A549 (cell line): ENCODE measurements at regions of chr14 and their contacts with region 1.

Region 1: DNA sequence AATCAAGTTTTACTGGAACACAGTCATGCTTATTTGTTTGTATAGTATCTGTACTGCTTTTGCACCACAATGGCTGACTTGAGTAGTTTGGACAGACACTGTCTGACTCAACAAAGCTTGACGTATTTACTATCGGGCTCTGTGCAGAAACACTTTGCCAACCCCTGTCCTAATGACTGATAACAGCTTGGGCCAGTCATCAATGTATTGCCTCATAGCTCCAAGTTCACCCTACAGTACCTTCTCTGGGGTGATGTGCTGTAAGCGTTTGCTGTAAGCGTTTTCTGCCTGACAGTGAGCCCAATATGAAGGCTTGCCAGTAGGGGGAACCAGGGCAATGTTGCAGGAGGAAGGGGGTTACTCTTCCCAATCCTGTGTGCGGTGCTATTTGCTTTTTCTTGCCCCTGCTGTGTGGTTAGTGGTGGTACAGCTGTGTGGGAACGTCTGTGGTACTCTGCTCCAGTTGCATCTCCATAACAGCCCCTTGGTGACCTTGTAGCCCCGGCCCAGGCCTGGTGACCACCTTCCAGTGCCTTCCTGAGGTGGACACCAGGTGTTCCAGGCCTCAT is 5.4 kb upstream of the CCDC177 start:
- DNase-seq: peak; percentile 60 to 71
- ATAC-seq: peak; percentile 92 to 93
- H3K4me3 ChIP-seq: no peak overlapping the region
- H3K27ac ChIP-seq: no peak overlapping the region
- H3K4me1 ChIP-seq: peaks cover 5% of the 10 kb centered on the region; the same call in 1 of the 3 replicates
- CTCF ChIP-seq: peak; percentile 32
- EP300 ChIP-seq: no peak
- POLR2A ChIP-seq: no peak
- RAD21 ChIP-seq: peak; percentile 34 to 46; a peak in 4 of 5 replicates

Region 2: DNA sequence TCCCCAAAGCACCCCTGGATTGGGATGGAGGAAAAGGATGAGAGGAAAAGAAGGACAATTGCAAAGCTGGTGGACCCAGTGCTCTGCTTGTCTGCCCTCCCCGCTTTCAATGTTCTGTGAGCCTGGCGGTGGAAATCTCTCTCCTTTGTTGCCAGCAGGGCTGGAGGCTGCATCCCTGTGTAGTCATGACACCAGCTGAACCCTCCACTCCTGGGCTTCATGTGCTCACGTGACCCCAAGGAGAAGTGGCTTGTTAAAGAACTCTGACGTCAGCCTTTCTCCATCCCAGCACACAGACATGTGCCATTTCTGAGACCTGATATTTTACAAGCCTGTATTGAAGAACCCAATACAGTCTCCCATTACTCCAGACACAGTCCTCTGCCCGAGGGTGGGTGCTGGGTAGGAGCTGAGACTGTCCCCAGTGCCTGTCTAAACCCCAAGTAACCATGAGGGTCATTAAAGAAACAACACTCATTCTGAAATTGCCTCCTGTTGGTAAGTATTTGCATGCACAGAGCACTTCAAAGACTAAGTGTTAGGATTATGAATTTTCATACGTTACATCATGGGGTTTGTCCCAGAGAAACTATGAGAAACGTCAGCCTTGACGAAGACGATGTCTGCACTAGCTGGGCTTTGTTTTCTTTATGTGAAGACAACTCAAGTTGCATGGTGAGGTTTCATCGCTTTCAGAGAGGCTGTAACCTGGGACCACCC is 298.5 kb before region 1 on chr14:
- CTCF ChIA-PET with region 1: no interaction called
- POLR2A ChIA-PET with region 1: no interaction called
- DNase-seq: no peak
- ATAC-seq: peak; percentile 27 to 32; a peak in 2 of 6 replicates
- H3K4me3 ChIP-seq: no peak overlapping the region
- H3K27ac ChIP-seq: no peak overlapping the region
- H3K4me1 ChIP-seq: no peaks in the 10 kb centered on the region
- CTCF ChIP-seq: no peak
- EP300 ChIP-seq: no peak
- POLR2A ChIP-seq: no peak
- RAD21 ChIP-seq: no peak

Region 3: DNA sequence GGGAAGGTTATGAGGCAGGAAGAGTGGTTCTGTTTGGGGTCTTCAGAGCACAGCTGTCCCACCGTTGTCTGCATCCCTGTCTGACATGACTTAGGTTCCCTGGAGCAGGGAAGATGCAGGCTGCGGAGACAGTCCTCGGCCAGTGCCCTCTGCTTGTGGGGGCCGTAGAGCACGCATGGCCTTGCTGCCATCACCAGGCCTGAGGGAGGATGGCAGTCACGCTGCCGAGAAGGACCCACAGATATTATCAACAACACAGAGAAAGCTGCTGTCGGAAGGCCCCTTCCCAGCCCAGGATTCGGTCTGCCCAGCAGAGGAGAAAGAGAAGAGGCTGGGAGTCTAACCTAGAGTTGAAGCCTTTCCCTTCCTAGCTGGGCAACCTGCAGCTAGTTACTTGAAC is 217.0 kb before region 1 on chr14:
- CTCF ChIA-PET with region 1: no interaction called
- POLR2A ChIA-PET with region 1: no interaction called
- DNase-seq: peak in 1 of 2 experiments; percentile 14
- ATAC-seq: peak; percentile 37 to 68; a peak in 3 of 6 replicates
- H3K4me3 ChIP-seq: no peak overlapping the region
- H3K27ac ChIP-seq: no peak overlapping the region
- H3K4me1 ChIP-seq: no peaks in the 10 kb centered on the region
- CTCF ChIP-seq: no peak
- EP300 ChIP-seq: no peak
- POLR2A ChIP-seq: no peak
- RAD21 ChIP-seq: peak; percentile 23 to 54; a peak in 3 of 5 replicates

Region 4: GRCh38 chr14:69481815-69482568 is 98.1 kb before region 1 on chr14:
- CTCF ChIA-PET with region 1: no interaction called
- POLR2A ChIA-PET with region 1: no interaction called
- DNase-seq: no peak
- ATAC-seq: no peak
- H3K4me3 ChIP-seq: no peak overlapping the region
- H3K27ac ChIP-seq: no peak overlapping the region
- H3K4me1 ChIP-seq: 0 out of 3 replicates have a peak, but pooled peaks cover 4% of the 10 kb centered on the region
- CTCF ChIP-seq: no peak
- EP300 ChIP-seq: no peak
- POLR2A ChIP-seq: no peak
- RAD21 ChIP-seq: no peak

Region 5: DNA sequence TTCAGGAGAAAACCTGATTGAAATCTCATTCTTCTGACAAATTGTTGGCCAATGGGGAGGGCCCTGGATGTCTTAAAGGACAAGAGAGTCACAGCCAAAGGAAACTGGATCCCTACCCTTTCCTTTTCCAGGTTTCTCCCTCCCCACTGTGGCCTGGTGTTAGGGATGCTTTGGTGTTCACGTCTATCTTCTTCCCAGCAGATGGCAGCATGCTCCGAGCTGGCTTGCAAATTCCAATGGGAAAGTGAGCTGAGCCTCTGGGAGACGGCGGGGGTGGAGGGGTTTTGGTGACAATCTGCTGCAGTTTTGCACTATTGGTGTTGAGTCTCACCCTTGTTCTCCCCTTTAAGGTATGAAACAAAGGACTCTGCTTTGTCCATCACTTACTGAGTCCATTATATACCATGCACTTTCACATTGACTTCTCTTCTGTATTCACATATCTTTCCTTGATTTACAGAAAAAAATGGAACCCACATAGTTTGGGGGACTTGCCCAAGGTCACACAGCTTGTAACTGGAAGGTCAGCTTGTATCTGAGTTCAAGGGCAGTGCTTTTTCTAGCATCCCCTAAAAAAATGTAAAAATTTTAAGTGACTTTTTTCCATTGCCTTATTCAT is 44.8 kb before region 1 on chr14:
- CTCF ChIA-PET with region 1: interaction called, 169 read pairs
- POLR2A ChIA-PET with region 1: no interaction called
- DNase-seq: peak; percentile 58 to 83
- ATAC-seq: peak; percentile 91 to 94
- H3K4me3 ChIP-seq: no peak overlapping the region
- H3K27ac ChIP-seq: no peak overlapping the region
- H3K4me1 ChIP-seq: no peaks in the 10 kb centered on the region
- CTCF ChIP-seq: peak; percentile 80
- EP300 ChIP-seq: no peak
- POLR2A ChIP-seq: no peak
- RAD21 ChIP-seq: peak; percentile 70 to 76

Region 6: GRCh38 chr14:69611201-69612011 is 31.3 kb after region 1 on chr14 and contains the start of gene SUSD6:
- CTCF ChIA-PET with region 1: interaction called, 21 read pairs
- POLR2A ChIA-PET with region 1: no interaction called
- DNase-seq: peak; percentile 86 to 91
- ATAC-seq: peak; percentile 89 to 92
- H3K4me3 ChIP-seq: peak within 1 kb of the TSS; percentile 95
- H3K27ac ChIP-seq: peak within 1 kb of the TSS; percentile 83 to 93
- H3K4me1 ChIP-seq: peaks cover 30% of the 10 kb centered on the region
- CTCF ChIP-seq: no peak
- EP300 ChIP-seq: no peak
- POLR2A ChIP-seq: peak; percentile 35
- RAD21 ChIP-seq: peak in 1 of 2 experiments; percentile 25; a peak in 1 of 5 replicates
- polyA plus RNA-seq, gene SUSD6: 7.0 and 7.9 TPM in 2 replicates

Region 7: DNA sequence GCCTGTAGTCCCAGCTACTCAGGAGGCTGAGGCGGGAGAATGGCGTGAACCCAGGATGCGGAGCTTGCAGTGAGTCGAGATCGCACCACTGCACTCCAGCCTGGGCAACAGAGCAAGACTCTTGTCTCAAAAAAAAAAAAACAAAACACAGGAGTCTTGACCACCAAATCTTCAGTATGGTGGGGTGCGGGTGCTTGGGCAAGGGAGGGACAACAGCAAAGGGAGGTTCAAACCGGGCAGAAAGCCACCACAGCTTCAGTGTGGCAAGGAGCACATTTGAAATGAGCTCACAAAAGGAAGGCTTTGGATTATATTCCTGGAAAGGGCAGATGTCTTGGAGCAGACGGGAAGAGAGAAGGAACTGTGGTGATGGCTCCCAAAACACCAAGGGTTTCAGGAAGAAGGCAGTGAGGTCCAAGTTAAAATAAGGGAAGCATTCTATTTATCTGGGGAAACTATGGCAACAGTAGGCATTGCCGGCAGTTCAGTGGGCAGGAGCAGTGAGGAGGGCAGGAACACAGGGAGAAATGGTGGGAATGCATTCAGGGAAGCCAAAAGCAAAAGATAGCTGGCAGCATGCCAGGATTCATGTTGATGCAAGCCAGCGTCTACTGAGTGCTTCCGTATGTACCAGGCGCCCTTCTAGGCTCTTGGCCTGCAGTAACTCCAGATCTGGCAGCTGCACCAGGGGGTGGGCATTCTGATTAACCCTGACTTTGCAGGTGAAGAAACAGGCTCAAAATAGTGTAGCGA is 135.8 kb after region 1 on chr14:
- CTCF ChIA-PET with region 1: interaction called, 56 read pairs
- POLR2A ChIA-PET with region 1: no interaction called
- DNase-seq: no peak
- ATAC-seq: 0 out of 6 replicates have a peak, but pooled peaks of 1 of the 2 experiments have one; percentile 16
- H3K4me3 ChIP-seq: no peak overlapping the region
- H3K27ac ChIP-seq: no peak overlapping the region
- H3K4me1 ChIP-seq: peaks cover 15% of the 10 kb centered on the region
- CTCF ChIP-seq: no peak
- EP300 ChIP-seq: no peak
- POLR2A ChIP-seq: no peak
- RAD21 ChIP-seq: no peak